ENCODE measurements at regions of chr4 and their contacts with region 1.

Region 1: GRCh38 chr4:157978680-157979361 is 194.0 kb downstream of the GASK1B start:
- DNase-seq: peak; percentile 44
- CTCF ChIP-seq: peak; percentile 85

Region 2: GRCh38 chr4:157217708-157218107 is 761.1 kb before region 1 on chr4:
- in situ Hi-C with region 1: loop called (anchors 10 kb)
- DNase-seq: no peak
- CTCF ChIP-seq: peak; percentile 48

Region 3: GRCh38 chr4:157514711-157515110 is 464.1 kb before region 1 on chr4:
- in situ Hi-C with region 1: no loop called
- DNase-seq: no peak
- CTCF ChIP-seq: peak; percentile 23

Region 4: GRCh38 chr4:157674699-157675098 is 304.1 kb before region 1 on chr4:
- in situ Hi-C with region 1: no loop called
- DNase-seq: no peak
- CTCF ChIP-seq: no peak

Region 5: DNA sequence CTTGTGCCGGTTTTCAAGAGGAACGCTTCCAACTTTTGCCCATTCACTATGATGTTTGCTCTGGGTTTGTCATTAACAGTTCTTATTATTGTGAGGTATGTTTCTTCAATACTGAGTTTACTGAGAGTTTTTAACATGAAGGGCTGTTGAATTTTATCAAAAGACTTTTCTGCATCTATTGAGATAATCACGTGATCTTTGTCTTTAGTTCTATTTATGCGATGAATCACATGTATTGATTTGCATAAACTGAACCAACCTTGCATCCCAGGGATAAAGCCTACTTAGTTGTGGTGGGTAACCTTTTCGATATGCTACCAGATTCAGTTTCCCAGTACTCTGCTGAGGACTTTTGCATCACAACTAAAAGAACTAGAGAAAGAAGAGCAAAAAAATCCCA is 124.0 kb before region 1 on chr4:
- in situ Hi-C with region 1: no loop called
- DNase-seq: no peak
- CTCF ChIP-seq: no peak

Region 6: DNA sequence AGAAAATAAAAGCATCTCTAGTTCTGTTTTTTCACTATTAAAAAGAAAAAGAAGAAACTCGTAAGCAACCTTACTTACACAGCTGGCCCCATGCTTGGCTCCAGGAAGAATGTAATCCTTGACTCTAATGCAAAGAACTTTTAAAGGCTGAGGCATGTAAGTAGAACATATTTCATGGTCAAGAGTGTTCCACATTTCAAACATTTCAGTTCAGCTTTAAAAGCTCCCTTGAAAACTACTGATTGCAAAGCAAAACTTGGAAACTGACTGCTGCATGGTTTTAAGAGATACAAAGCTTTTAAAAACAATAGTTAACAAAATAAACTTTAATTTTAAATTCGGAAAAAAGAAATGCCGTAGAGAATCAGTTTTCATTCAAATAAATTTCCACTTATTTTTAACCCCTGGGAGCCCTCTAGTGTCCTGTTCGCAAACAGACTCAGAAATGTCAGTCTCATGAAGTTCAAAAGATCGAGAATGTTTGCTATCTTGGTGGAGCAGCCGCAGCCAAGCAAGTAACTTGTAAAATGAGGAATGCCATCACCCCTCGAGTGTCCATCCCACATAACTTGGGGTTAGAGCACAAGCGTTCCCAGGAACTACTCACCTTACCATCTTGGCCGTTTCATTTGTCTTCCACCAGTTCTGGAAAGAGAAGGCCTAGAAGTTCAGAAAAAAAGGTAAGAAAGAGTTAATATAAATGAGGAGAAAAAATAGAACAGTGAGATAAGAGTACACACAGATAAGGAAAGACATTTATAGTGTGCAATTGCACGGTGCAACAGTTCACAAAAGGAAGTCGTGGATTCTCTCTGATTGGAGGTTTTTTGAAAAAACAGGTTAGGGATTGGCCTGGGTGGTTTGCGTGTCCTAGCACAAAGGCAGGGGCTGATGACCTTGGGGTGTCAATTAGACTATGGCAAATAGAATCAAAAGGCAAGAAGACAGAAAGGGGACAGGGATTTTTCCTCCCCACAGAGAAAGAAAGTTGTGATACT is 193.7 kb after region 1 on chr4 and contains the start of gene GASK1B:
- in situ Hi-C with region 1: loop called (anchors 25 kb)
- DNase-seq: peak; percentile 36
- CTCF ChIP-seq: peak; percentile 59

Region 7: GRCh38 chr4:158253350-158253980 is 274.6 kb after region 1 on chr4:
- in situ Hi-C with region 1: loop called (anchors 25 kb)
- DNase-seq: peak; percentile 29
- CTCF ChIP-seq: peak; percentile 72

Region 8: GRCh38 chr4:158624889-158625478 is 646.2 kb after region 1 on chr4:
- in situ Hi-C with region 1: loop called (anchors 25 kb)
- DNase-seq: peak; percentile 24
- CTCF ChIP-seq: peak; percentile 66

Measured in GM13977 (cell line).